Esophagus muscularis mucosa (tissue), 4 donors: ENCODE measurements at regions of chr11 and their contacts with region 1.

Region 1: GRCh38 chr11:124875943-124876817 is 10.9 kb downstream of the ROBO3 start:
- DNase-seq: peak; percentile 98
- H3K4me3 ChIP-seq: peak overlapping the region; percentile 58 to 83 (median 72)
- H3K27ac ChIP-seq: peak overlapping the region; percentile 86 to 92 (median 90)
- H3K4me1 ChIP-seq: peaks cover 17 to 30% (median 27%) of the 10 kb centered on the region in 4 donors
- H3K27me3 ChIP-seq: peaks cover 0 to 35% (median 3%) of the 10 kb centered on the region in 4 donors
- CTCF ChIP-seq: peak; percentile 71 to 76 (median 75)
- EP300 ChIP-seq: no peak
- POLR2A ChIP-seq: no peak

Region 2: GRCh38 chr11:124953753-124954589 is 77.8 kb after region 1 on chr11 and contains the start of gene CCDC15:
- intact Hi-C with region 1: loop called (anchors 5 kb)
- DNase-seq: peak; percentile 99
- H3K4me3 ChIP-seq: peak within 1 kb of the TSS; percentile 72 to 77 (median 74)
- H3K27ac ChIP-seq: peak within 1 kb of the TSS; percentile 80 to 88 (median 82)
- H3K4me1 ChIP-seq: peaks cover 6 to 17% (median 14%) of the 10 kb centered on the region in 4 donors
- H3K27me3 ChIP-seq: no peaks in the 10 kb centered on the region
- CTCF ChIP-seq: no peak
- EP300 ChIP-seq: no peak
- POLR2A ChIP-seq: peak; percentile 30
- total RNA-seq, gene CCDC15: 0.42 to 1.6 (median 0.60) TPM